Activated CD4-positive, alpha-beta T cell treated with anti-CD3 and anti-CD28 coated beads for 36 hours (primary cell): ENCODE measurements at regions of chr14 and their contacts with region 1.

Region 1: DNA sequence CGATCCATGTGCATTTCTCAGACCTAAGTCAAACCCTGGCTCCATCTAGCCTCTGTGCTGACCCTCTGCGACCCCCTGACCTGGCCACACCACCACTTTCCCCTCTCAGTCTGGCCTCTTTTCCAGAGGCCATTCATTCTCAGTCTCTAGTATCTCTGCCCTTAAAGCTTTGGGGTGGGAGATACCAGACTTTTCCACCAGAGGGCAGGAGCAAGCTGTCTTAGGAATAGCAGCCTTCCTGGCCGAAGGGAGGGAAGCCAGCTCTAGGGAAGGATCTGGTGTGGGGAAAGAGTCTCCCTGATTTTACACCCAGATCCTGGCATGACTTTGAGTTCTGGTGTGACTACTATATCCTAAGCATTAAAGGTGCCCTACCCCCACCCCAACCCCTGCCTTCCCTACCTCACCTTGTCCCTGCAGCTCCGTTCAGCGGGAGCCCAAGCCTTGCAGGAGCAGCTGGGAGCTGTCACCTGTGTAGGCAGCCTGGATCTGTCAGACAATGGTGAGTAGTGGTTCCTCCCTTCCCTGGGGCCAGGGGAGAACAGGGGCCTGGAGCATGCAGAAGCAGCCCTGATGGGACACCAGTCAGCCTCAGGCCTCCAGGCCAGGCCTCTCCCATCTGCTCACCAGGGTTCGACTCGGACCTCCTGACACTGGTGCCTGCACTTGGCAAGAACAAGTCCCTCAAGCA is 6.6 kb downstream of the CARMIL3 start:
- DNase-seq: peak; percentile 73
- ATAC-seq: peak; percentile 63
- H3K4me3 Mint-ChIP-seq: no peak overlapping the region
- H3K27ac Mint-ChIP-seq: peak overlapping the region; percentile 40
- H3K4me1 Mint-ChIP-seq: peaks cover 4% of the 10 kb centered on the region
- H3K27me3 Mint-ChIP-seq: peaks cover 2% of the 10 kb centered on the region

Region 2: DNA sequence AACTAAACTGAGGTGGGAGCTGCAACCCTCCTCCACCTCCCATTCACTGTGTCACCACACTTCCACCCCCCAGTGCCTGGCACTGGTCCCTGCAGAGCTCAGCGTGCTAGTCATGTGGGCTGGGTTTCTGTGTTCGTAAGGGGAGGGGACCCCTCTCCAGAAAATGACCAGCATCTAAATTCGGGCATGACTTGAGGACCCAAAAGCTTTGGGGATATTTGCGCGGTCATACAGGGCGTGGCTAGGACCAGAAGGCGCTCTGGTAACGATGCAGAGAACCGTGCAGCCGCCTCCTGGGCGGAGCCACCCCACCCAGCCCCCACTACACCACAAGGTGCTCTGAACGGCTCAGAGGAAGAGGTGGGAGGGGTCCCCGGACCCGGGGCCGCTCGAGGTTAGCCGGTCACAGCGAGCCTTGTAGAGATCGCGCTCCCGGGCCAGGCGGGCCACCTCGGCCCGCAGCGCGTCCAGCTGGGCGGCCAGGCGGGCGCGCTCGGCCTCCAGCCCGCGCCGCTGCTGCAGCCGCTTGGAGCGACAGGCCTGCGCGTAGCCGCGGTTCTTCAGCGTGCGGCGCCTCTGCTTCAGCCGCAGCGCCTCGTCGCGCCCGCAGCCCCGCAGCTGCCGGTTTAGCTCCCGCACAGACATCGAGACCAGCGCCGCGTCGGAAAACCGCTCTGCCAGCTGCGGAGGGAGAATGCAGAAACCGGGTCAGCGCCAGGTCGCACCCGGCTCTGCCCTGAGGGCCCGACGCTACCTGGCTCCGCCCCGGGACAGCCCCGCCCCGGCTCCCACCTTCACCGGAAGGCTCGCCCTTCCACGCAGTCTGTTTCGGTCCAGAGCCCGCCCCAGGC is 22.7 kb after region 1 on chr14:
- CTCF ChIA-PET with region 1: interaction called, 16 read pairs
- POLR2A ChIA-PET with region 1: interaction called, 8 read pairs
- intact Hi-C with region 1: no loop called
- DNase-seq: peak; percentile 84
- ATAC-seq: peak; percentile 92
- H3K4me3 Mint-ChIP-seq: peak overlapping the region; percentile 68
- H3K27ac Mint-ChIP-seq: peak overlapping the region; percentile 45
- H3K4me1 Mint-ChIP-seq: peaks cover 20% of the 10 kb centered on the region
- H3K27me3 Mint-ChIP-seq: no peaks in the 10 kb centered on the region

Region 3: DNA sequence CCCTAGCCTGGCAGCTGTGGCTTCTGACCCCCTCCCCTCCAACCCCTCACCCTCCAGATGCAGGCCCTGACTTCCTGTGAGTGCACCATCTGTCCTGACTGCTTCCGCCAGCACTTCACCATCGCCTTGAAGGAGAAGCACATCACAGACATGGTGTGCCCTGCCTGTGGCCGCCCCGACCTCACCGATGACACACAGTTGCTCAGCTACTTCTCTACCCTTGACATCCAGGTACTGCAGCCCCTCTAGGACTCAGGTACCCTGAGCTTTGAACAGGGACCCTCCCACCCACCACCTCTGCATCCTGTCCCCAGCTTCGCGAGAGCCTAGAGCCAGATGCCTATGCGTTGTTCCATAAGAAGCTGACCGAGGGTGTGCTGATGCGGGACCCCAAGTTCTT is 96.7 kb after region 1 on chr14:
- CTCF ChIA-PET with region 1: no interaction called
- POLR2A ChIA-PET with region 1: no interaction called
- intact Hi-C with region 1: no loop called
- DNase-seq: no peak
- ATAC-seq: no peak
- H3K4me3 Mint-ChIP-seq: no peak overlapping the region
- H3K27ac Mint-ChIP-seq: no peak overlapping the region
- H3K4me1 Mint-ChIP-seq: peaks cover 6% of the 10 kb centered on the region
- H3K27me3 Mint-ChIP-seq: no peaks in the 10 kb centered on the region